ENCODE measurements at regions of chr17 and their contacts with region 1.

Region 1: DNA sequence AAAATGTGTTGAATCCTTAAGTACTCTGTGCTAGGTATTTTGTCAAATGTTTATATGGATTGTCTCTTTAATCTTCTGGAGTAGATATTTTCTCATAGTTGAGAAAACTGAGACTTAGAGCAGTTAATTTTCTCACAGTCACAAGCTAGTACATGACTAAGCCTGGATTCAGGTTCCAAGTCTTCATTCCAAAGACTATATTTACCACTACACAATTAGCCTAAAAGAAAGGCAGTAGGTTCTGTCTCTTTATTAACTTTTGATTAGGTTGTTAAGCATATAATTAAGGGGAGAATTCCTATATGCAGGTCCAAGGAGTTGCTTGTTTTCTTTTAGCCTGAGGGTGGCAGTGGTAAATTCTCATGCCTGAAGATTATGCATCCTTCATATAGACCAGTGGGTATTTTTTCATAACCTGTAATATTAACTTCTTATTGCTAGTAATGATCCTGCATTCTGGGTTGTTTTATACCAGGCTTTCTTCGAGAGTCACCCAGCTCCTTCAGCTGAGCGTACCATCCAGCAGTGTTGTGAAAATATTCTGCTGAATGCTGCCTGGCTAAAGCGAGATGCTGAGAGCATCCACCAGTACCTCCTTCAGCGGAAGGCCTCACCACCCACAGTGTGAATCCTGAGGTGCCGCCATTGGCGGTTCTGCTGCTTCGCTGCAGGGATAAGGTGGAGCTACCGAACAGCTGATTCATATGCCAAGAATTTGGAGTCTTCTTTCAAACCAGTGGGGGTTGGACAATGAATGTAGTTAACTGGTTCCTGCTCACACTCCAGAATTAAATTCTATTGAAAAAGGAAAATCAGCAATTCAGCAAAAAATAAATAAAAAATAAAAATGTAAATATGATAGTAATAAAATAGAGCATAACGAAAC is 28.2 kb upstream of the KPNB1 start:
- DNase-seq: no peak
- H3K4me3 ChIP-seq: peak overlapping the region in 1 of 2 experiments; percentile 13; a peak in 1 of 4 replicates
- H3K27ac ChIP-seq: peak overlapping the region; percentile 77 to 78
- H3K4me1 ChIP-seq: peaks cover 0 to 19% of the 10 kb centered on the region in 2 experiments; a peak in 2 of 4 replicates
- H3K27me3 ChIP-seq: no peaks in the 10 kb centered on the region
- CTCF ChIP-seq: peak; percentile 36
- EP300 ChIP-seq: peak in 1 of 2 experiments; percentile 25; a peak in 1 of 4 replicates
- RAD21 ChIP-seq: no peak

Region 2: DNA sequence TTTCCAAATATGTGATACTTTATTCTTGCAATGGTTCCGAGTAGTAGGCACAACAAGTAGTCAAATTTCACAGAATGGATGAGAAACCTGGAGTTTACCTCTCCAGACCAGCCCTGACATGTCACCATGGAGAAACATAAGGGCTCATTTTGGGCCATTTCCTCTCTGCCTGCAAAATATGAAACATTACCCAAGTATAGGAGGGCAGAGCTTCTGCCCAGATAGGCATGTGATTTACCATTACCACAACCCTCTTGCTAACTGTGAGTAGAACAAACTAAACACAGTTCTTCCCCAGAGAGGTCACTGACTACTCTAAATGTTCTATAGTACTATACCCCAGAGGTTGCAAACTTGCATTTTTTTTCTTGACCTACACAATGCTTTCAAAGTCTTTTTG is 12.5 kb after region 1 on chr17:
- CTCF ChIA-PET with region 1: interaction called, 79 read pairs
- POLR2A ChIA-PET with region 1: interaction called, 4 read pairs
- DNase-seq: no peak
- H3K4me3 ChIP-seq: no peak overlapping the region
- H3K27ac ChIP-seq: no peak overlapping the region
- H3K4me1 ChIP-seq: peaks cover 0 to 4% of the 10 kb centered on the region in 2 experiments; a peak in 1 of 4 replicates
- H3K27me3 ChIP-seq: no peaks in the 10 kb centered on the region
- CTCF ChIP-seq: no peak
- EP300 ChIP-seq: no peak
- RAD21 ChIP-seq: no peak

Region 3: DNA sequence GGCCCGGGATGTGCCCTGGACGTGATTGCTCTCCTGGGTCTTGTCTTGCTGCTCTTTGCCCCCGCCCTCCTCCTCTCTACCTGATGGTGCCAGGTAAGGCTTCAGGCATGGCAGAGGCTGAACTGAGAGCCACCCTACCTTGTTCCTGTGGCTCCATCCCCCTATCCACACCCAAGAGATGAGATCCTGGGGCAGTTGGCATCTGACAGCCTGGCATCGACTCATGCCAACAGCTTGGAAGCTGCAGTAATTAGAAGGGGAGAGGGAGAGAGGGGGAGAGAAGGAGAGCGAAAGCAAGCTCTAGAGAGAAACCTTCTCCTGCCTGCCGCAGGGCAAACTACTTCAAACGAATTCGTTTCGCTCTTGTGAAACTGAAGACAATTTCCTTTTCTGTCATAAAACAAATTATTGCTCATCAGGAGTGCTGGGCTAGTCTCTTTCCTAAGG is 243.3 kb after region 1 on chr17:
- CTCF ChIA-PET with region 1: no interaction called
- POLR2A ChIA-PET with region 1: no interaction called
- DNase-seq: no peak
- H3K4me3 ChIP-seq: no peak overlapping the region
- H3K27ac ChIP-seq: no peak overlapping the region
- H3K4me1 ChIP-seq: peaks cover 0 to 5% of the 10 kb centered on the region in 2 experiments; a peak in 1 of 4 replicates
- H3K27me3 ChIP-seq: peaks cover 16% of the 10 kb centered on the region
- CTCF ChIP-seq: no peak
- EP300 ChIP-seq: no peak
- RAD21 ChIP-seq: no peak

Measured in SK-N-SH (cell line).